Activated naive CD4-positive, alpha-beta T cell treated with anti-CD3 and anti-CD28 coated beads for 36 hours (primary cell): ENCODE measurements at regions of chr7 and their contacts with region 1.

Region 1: DNA sequence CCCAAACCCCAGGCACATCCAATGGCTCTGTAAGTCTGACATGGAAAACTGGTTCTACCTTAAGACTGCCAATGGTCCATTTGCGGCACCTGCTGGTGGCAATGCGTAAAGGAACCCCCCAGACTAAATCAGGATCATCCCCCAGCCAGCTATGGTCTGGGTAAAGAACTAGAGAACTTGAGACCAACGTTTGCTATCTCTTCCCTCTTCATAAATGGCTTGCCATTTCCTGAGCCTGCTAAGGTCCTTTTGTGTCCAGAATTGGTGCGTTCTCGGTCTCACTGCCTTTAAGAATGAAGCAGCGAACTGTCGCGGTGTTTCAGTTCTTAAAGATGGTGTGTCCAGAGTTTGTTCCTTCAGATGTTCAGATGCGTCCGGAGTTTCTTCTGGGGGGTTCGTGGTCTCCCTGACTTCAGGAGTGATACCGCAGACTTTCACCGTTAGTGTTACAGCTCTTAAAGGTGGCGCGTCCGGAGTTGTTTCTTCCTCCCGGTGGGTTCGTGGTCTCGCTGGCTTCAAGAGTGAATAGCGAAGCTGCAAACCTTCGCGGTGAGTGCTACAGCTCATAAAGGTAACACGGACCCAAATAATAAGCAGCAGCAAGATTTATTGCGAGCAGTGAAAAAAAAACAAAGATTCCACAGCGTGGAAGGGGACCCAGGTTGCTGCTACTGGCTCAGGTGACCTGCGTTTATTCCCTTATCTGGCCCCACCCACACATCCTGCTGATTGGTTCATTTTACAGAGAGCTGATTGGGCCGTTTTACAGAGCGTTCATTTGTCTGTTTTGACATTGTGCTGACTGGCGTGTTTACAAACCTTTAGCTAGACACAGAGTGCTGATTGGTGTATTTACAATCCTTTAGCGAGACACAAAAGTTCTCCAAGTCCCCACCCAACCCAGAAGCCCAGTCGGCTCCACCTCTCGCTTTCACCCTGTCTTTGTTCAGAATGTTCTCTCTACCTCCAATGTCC is 95.4 kb downstream of the ELMO1 start:
- DNase-seq: peak; percentile 90
- H3K4me3 Mint-ChIP-seq: peak overlapping the region; percentile 96
- H3K27ac Mint-ChIP-seq: peak overlapping the region; percentile 97
- H3K4me1 Mint-ChIP-seq: peaks cover 88% of the 10 kb centered on the region
- H3K27me3 Mint-ChIP-seq: no peaks in the 10 kb centered on the region

Region 2: GRCh38 chr7:36487756-36488336 is 865.4 kb before region 1 on chr7:
- CTCF ChIA-PET with region 1: no interaction called
- intact Hi-C with region 1: loop called (anchors 1 kb)
- DNase-seq: peak; percentile 54
- H3K4me3 Mint-ChIP-seq: no peak overlapping the region
- H3K27ac Mint-ChIP-seq: no peak overlapping the region
- H3K4me1 Mint-ChIP-seq: peaks cover 2% of the 10 kb centered on the region
- H3K27me3 Mint-ChIP-seq: no peaks in the 10 kb centered on the region

Region 3: GRCh38 chr7:36506820-36507219 is 846.4 kb before region 1 on chr7:
- CTCF ChIA-PET with region 1: no interaction called
- intact Hi-C with region 1: no loop called
- DNase-seq: no peak
- H3K4me3 Mint-ChIP-seq: no peak overlapping the region
- H3K27ac Mint-ChIP-seq: no peak overlapping the region
- H3K4me1 Mint-ChIP-seq: no peaks in the 10 kb centered on the region
- H3K27me3 Mint-ChIP-seq: no peaks in the 10 kb centered on the region

Region 4: DNA sequence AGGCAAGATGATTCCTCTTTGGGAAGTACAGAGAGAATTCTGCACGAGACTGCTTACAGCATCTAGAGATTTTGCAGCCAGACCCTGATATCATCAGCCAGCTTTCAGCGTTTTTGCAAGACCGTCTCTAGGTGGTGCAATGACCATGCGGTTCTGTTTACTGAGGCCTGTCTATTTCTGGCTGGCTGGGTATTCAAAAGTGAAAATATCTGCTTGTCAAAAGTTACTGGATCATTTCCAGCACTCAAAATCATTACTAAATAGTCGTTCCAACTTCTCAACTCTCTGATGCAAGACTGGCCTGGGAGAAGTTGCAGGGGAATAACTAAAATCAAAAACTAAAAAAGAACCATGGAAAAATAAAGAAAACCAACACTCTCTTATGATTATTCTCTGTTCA is 144.7 kb before region 1 on chr7:
- CTCF ChIA-PET with region 1: interaction called, 3 read pairs
- intact Hi-C with region 1: loop called (anchors 1 kb)
- DNase-seq: peak; percentile 52
- H3K4me3 Mint-ChIP-seq: no peak overlapping the region
- H3K27ac Mint-ChIP-seq: peak overlapping the region; percentile 56
- H3K4me1 Mint-ChIP-seq: peaks cover 23% of the 10 kb centered on the region
- H3K27me3 Mint-ChIP-seq: no peaks in the 10 kb centered on the region

Region 5: GRCh38 chr7:37365405-37365804 is 12.1 kb after region 1 on chr7:
- CTCF ChIA-PET with region 1: interaction called, 6 read pairs
- intact Hi-C with region 1: loop called (anchors 1 kb)
- DNase-seq: no peak
- H3K4me3 Mint-ChIP-seq: peak overlapping the region; percentile 15
- H3K27ac Mint-ChIP-seq: peak overlapping the region; percentile 99
- H3K4me1 Mint-ChIP-seq: peaks cover 88% of the 10 kb centered on the region
- H3K27me3 Mint-ChIP-seq: no peaks in the 10 kb centered on the region

Region 6: DNA sequence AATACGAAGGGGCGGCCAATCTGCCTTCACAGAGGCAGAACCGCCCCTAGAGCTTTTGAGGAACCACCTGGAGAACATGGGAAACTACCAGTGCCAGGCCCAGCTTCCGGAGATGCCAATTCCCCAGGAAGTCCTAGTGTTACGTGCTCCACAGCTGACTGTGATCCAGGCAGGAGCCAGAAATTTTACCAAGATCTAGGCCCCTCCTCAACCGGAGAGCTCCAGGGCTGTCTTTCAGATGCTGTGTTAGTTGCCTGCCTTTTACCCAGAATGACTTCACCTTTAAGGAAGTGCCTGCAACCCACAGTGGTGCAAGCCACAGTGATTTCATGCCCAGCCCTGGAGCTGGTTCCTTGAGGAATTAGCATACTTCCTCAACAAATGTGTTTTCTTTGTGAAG is 32.5 kb after region 1 on chr7:
- CTCF ChIA-PET with region 1: no interaction called
- intact Hi-C with region 1: no loop called
- DNase-seq: no peak
- H3K4me3 Mint-ChIP-seq: no peak overlapping the region
- H3K27ac Mint-ChIP-seq: no peak overlapping the region
- H3K4me1 Mint-ChIP-seq: peaks cover 53% of the 10 kb centered on the region
- H3K27me3 Mint-ChIP-seq: no peaks in the 10 kb centered on the region

Region 7: DNA sequence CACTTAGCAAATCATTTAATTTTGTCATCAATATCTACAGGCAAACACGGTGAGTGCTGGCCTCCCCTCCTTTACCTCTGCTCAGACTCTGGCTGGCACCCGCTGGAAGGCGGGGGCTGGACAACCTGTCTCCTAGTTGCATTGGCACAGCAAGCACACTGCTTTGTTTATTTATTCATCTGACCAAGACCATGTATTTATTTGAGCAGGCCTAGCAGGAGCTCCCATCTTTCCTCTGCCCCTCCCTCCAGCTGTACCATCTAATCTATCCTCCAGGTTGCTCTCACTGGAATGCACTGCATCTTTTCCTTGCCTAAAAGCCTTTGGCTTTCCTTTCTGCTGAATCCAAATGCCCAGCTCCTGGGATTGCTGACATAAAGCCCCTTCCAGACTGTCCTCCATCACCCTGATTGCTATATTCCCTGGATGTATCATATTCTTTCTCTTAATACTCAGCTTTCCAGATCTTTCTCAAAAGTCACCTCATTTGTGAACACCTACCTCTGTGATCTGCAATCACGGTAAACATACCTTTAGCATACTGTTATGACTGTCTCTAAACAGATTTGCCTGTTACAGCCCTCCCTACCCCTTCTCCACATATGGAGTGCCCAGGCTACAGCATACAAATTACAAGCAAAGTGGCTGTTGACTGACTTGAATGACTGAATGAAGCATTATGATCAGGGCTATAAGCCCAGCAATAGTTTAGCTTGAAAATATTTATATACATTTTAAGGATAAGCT is 85.8 kb after region 1 on chr7:
- CTCF ChIA-PET with region 1: interaction called, 8 read pairs
- intact Hi-C with region 1: loop called (anchors 1 kb)
- DNase-seq: no peak
- H3K4me3 Mint-ChIP-seq: no peak overlapping the region
- H3K27ac Mint-ChIP-seq: peak overlapping the region; percentile 97
- H3K4me1 Mint-ChIP-seq: peaks cover 92% of the 10 kb centered on the region
- H3K27me3 Mint-ChIP-seq: no peaks in the 10 kb centered on the region

Region 8: DNA sequence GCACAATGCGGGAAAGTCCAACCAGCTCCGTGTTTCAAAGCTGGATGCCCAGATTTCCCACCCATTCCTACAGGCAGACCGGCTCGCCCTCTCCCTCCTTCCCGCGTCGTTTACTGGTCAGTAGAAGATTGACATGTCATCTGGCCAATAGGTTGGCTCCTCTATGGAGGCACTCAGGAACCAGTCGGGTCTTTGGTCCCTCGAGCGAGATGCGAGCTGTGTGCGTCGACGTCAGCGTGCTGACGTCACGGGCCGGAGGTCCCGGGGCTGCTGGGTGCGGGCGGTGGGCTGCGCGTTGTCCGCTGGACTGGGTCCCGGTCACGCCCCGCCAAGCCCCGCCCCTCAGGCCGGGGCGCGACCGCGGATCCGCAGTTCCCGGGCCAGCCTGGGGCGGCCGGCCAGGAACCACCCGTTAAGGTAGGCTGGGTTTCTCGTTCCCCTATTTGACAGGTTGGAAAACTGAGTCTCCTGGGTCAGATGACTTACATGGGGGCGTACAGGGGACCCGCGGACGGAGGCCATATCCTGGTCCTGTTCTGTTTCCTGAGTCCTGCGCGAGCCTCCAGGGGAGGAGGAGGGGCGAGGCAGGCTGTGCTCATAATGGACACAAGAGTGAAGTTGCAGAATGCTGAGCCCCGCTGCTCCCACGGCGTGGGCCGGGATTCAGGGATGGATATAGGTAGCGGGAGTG is 824.9 kb after region 1 on chr7 and contains the start of gene STARD3NL:
- CTCF ChIA-PET with region 1: no interaction called
- intact Hi-C with region 1: loop called (anchors 10 kb)
- DNase-seq: peak; percentile 96
- H3K4me3 Mint-ChIP-seq: peak within 1 kb of the TSS; percentile 94
- H3K27ac Mint-ChIP-seq: peak within 1 kb of the TSS; percentile 91
- H3K4me1 Mint-ChIP-seq: peaks cover 33% of the 10 kb centered on the region
- H3K27me3 Mint-ChIP-seq: peaks cover 9% of the 10 kb centered on the region
- total RNA-seq, gene STARD3NL: 23.7 to 25.7 TPM